Right ventricle myocardium inferior (tissue), 1 donor: ENCODE measurements at regions of chr4 and their contacts with region 1.

Region 1: GRCh38 chr4:76213415-76214176 is at the start of gene SCARB2:
- DNase-seq: peak; percentile 95
- ATAC-seq: peak; percentile 97
- total RNA-seq, gene SCARB2: 102 TPM

Region 2: DNA sequence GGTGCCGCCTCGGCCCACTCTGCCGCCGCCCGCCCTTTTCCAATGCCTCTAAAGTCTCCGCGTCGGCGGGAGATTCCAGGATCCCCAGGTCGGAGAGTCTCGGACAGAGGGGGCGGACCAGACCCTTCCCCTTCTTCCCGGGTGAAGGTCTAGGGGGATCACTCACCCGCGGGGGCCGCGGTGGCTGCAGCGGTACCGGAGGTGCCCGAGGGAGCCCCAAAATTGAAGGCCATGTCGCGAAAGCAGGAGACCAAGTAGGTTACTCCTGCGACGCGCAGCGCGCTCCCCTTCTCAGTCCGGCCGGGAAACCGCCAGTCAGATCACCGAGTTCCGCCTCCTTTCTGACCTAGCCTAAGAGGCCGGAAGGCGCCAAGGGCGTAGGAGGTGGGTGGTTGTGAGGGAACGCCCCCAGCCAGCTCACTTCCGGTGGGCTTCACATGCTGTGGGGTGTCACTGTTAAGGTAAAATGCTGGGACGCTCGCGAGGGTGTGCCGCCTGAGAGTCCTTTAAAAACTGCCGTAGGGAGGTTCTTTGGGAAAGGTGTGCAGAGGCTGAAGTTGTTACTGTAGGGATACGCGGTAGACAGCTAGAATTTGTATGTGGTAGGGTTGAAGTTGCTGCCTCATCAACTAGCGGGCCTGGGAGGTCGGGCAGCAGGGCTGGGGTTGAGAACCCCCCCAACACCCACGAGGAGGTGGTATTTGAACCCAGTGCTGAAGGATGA is 65.3 kb before region 1 on chr4 and contains the start of gene NUP54:
- intact Hi-C with region 1: loop called (anchors 1 kb)
- DNase-seq: peak; percentile 97
- ATAC-seq: peak; percentile 99
- total RNA-seq, gene NUP54: 21.6 TPM

Region 3: GRCh38 chr4:76198411-76199237 is 15.0 kb before region 1 on chr4:
- intact Hi-C with region 1: loop called (anchors 2 kb)
- DNase-seq: peak; percentile 68
- ATAC-seq: peak; percentile 67